ENCODE measurements at regions of chr19 and their contacts with region 1.

Region 1: GRCh38 chr19:46614114-46614722 is 10.7 kb downstream of the PTGIR start:
- H3K4me3 ChIP-seq: no peak overlapping the region
- H3K27ac ChIP-seq: no peak overlapping the region
- H3K4me1 ChIP-seq: no peaks in the 10 kb centered on the region
- CTCF ChIP-seq: peak; percentile 80

Region 2: DNA sequence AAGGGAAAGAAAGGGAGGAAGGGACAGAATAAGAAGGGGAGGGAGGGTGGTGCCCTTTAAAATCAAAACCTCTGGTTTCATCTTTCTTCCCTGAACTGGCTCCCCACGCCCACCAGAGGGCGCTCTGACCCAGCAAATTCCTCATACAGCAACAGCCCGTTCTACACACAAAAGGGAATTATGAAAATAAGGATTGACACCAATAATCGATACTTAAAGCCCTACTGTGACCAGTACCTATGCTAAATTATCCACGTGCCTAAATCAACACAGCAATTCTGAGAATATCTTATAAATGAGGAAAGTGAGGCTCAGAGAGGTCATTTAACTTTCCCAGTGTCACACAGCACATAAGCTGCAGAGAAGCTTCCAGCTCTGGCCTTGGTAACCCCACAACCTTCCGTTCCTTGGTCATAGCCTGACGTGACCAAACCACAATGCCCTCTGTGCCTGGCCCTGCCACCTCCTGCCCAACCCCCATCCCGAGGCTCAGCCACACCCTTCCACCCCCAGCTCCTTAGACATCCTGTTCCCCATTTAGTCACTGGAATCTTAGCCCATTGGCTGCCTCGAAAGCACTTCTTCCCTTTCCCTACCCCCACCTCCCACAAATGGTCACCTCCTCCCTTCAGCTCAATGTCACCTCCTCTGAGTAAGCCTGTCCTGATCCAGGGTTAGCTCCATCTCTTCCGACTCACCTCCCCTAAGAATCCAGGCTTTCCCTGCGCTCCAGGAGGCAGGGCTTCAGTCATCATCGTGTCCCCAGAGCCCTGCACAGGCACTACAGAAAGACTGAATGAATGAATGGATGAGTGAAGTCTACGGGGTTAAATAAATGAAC is 84.4 kb before region 1 on chr19:
- CTCF ChIA-PET with region 1: interaction called, 27 read pairs
- POLR2A ChIA-PET with region 1: interaction called, 4 read pairs
- H3K4me3 ChIP-seq: no peak overlapping the region
- H3K27ac ChIP-seq: no peak overlapping the region
- H3K4me1 ChIP-seq: no peaks in the 10 kb centered on the region
- CTCF ChIP-seq: peak; percentile 89

Region 3: DNA sequence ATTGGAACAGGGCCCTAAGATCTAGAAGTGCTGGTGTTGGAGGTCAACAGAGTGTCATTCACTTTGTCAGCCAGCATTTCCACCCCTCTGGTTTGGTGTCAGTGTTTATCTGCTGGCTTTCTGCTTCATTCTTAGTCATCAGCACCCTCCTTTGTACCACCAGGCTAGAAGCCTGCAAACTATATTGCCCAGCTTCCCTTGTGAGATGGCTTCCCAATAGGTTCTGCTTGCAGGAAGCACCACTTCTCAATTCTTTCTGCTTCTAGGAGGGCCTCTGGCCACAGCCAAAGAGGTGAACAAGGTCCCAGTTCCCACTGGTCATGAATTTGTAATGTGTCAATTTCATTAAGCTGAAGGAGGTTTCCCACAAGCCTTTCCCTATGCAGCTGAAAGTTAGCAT is 49.5 kb before region 1 on chr19:
- CTCF ChIA-PET with region 1: no interaction called
- POLR2A ChIA-PET with region 1: no interaction called
- H3K4me3 ChIP-seq: no peak overlapping the region
- H3K27ac ChIP-seq: no peak overlapping the region
- H3K4me1 ChIP-seq: no peaks in the 10 kb centered on the region
- CTCF ChIP-seq: no peak

Region 4: DNA sequence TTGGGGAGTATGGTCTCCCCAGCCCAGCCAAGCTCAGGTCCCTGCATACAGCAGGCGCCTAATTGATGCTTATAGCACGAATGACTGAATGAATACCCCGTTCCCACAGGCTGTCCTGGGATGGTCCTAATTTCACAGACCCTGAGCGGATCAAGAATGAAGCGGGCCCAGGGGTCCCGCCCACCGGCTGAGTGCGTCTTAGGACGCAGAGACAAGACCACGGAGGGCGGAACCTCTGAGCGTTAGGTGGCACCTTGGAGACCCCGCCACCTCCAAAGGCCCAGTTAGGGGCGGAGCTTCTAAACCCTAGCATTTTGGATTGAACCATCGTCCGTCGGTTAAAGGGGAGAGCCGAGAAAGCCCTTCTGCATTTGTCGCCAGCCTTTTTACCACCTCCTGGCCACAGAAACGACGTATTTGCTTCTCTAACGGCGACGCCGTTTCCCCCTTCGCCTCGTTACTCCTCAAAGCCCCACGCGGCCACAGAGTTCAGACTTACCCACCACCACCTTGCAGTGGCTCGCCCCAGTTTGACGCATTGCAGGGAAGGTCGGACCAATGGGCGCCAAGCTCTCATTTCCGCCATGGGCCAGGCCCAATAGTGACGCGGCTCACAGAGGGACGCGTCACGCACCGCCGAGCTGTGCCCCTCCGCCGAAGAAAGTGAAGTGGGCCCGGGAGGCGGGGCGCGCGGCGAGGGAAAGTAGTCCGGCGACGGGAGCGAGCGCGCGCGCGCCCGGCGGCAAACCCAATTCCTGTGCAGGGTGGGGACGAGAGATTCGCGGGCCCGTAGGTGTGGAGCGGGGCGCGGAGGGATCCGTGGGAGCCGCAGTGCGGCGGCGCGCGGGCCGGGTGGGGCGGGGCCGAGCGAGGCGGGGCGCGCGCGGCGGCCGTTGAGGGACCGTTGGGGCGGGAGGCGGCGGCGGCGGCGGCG is 13.6 kb before region 1 on chr19:
- CTCF ChIA-PET with region 1: interaction called, 41 read pairs
- POLR2A ChIA-PET with region 1: interaction called, 39 read pairs
- H3K4me3 ChIP-seq: peak overlapping the region; percentile 94
- H3K27ac ChIP-seq: peak overlapping the region; percentile 99
- H3K4me1 ChIP-seq: peaks cover 8% of the 10 kb centered on the region
- CTCF ChIP-seq: no peak

Region 5: DNA sequence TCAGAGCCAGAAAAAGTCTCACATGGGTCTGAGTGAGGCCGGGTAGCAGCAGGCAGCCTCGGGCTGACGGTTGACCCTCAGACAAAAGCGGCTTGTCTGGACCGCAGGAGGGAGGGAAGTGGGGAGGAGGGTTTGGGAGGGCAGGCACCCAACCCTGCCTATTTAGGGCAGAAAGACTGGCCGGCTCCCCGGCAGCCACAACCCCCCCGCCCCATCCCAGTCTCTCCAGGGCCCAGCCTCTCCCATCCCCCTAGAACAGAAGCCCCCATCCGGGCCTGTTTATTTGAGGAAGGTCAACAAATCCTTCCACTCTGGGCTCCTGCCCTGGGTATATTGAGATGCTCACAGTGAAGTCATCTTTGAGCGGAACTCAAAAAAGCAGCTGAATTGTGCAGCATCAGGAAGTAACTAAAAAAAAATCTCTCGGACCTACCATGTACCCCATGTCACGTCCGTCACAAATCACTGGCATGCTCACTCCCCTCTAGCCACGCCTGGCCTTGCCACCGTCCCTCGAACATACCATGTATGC is 40.5 kb after region 1 on chr19:
- CTCF ChIA-PET with region 1: interaction called, 327 read pairs
- POLR2A ChIA-PET with region 1: no interaction called
- H3K4me3 ChIP-seq: no peak overlapping the region
- H3K27ac ChIP-seq: no peak overlapping the region
- H3K4me1 ChIP-seq: peaks cover 5% of the 10 kb centered on the region
- CTCF ChIP-seq: no peak

Region 6: DNA sequence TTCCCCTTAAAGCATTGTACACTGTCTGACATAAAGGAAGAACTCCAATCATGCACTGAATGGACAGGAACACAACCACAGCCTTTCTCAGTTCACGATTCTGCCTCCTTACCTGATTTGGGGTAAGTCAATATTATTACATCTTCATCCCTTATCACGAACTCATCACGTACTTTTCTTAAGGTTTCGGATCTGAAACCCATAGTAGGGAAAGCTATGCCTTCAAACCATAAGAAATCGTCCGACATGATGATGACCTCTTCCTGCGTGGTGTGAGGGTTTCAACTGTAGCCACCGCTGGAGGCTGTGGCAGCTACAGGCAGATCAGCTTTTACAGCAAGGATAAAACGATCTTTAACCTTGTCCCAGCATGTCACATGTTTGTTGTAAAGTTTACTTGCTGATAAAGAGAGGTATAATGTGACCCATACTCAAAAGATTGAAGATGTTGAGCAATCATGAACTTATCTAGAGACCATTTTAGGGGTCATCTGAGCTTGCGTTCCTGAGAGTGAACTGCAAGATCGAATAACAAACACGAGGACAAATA is 1271.9 kb after region 1 on chr19 and contains the start of gene SULT2A1:
- CTCF ChIA-PET with region 1: no interaction called
- POLR2A ChIA-PET with region 1: interaction called, 11 read pairs
- H3K4me3 ChIP-seq: no peak within 1 kb of the TSS
- H3K27ac ChIP-seq: no peak within 1 kb of the TSS
- H3K4me1 ChIP-seq: peaks cover 18% of the 10 kb centered on the region
- CTCF ChIP-seq: no peak

Measured in HEK293 (cell line).